BJ (cell line): ENCODE measurements at regions of chr12 and their contacts with region 1.

Region 1: DNA sequence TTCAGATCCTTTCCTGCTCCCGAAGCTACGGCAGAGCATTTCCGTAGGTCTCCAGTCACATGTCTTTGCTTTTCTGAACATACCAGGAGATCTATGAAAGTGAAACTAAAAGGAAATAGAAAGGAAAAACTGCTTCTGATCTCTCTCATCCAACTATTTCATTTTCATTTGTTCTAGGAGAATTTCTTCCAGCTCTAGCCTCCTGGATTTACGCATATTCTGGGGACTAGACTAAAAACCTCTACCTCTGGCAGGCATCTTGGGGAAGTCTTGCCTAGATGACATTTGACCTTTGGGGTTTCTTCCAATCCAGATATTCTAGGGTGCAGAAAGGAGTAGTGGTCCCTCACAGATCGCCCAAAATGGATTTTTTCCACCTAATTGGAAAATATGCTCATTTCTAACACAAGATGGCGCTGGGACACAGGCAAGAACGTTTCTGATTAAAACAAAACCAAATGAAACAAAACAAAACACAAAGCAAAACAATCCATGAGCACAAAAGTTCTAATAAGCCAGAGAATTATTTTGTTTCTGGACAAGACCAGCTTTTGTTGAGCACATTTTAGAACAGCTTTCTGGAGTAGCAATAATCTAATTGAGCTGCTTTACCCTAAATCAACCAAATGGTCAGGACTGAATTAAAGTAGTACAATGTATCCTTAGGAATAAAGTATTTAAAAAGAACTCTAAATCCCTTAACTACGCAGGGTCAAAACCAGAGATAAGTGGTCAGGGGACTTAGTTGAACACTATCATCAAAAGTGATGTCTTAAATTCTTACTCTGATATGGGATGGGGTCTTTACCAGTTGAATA is 12.3 kb upstream of the PARP11 start:
- DNase-seq: no peak
- H3K4me3 ChIP-seq: peak overlapping the region; percentile 34
- H3K27me3 ChIP-seq: peaks cover 2% of the 10 kb centered on the region
- CTCF ChIP-seq: peak; percentile 77

Region 2: GRCh38 chr12:3752741-3753486 is 132.6 kb before region 1 on chr12 and contains the start of gene CRACR2A:
- CTCF ChIA-PET with region 1: no interaction called
- POLR2A ChIA-PET with region 1: no interaction called
- DNase-seq: no peak
- H3K4me3 ChIP-seq: peak within 1 kb of the TSS; percentile 42
- H3K27me3 ChIP-seq: peaks cover 2% of the 10 kb centered on the region
- CTCF ChIP-seq: peak; percentile 44
- polyA plus RNA-seq, gene CRACR2A: 1.4 TPM in 2 replicates

Region 3: GRCh38 chr12:3872800-3873636 is 12.5 kb before region 1 on chr12 and contains the start of gene PARP11:
- CTCF ChIA-PET with region 1: interaction called, 16 read pairs
- POLR2A ChIA-PET with region 1: no interaction called
- DNase-seq: peak; percentile 79
- H3K4me3 ChIP-seq: peak within 1 kb of the TSS; percentile 65
- H3K27me3 ChIP-seq: no peaks in the 10 kb centered on the region
- CTCF ChIP-seq: no peak
- polyA plus RNA-seq, gene PARP11: 3.4 and 7.0 TPM in 2 replicates

Region 4: GRCh38 chr12:3896801-3897331 is 11.4 kb after region 1 on chr12:
- CTCF ChIA-PET with region 1: interaction called, 25 read pairs
- POLR2A ChIA-PET with region 1: no interaction called
- DNase-seq: no peak
- H3K4me3 ChIP-seq: no peak overlapping the region
- H3K27me3 ChIP-seq: peaks cover 4% of the 10 kb centered on the region; the same call in 1 of the 2 replicates
- CTCF ChIP-seq: no peak

Region 5: DNA sequence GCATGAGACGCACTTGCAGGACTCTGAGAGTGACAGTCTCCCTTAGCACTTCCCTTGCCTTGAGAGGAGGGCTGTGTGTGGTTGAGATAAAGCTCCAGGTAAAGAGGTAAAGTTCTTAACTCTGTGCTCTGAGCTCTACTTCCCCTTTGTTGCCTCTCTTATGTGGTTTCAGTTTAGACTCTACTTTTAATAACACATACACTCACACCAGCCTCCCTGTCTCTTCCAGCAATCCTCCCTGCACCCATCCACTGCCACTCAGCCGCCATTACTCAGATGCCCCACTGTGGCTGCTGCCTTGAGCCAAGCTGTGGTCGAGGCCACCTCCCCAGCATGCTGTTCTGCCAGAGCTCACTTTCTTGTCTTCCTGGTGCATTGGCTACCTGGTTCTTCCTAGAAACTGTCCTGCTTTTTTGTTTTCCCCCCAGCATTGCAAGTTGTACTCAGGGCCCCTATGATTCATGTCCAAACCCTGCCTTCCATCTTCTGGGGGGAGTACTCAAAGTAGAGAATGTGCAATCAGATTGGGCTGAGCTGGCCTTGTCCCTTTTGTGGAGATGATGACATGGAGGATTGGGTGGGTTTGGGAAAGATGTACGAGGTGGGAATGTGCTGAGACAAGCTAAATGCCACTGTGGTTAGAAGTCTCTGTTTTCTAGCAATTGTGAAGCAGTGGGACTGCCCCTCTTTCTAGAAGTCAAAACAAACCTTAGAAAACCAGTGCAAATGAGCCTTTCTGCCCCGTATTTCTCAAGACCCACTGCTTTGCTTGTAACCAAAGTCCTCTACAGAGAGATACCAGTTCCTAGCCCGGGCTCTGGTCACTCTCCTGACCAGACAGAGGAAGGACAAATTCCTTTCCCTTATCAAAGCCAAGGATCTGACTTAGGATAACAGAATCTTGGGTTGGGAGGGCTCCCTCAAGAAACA is 103.3 kb after region 1 on chr12:
- CTCF ChIA-PET with region 1: interaction called, 21 read pairs
- POLR2A ChIA-PET with region 1: no interaction called
- DNase-seq: no peak
- H3K4me3 ChIP-seq: no peak overlapping the region
- H3K27me3 ChIP-seq: peaks cover 1% of the 10 kb centered on the region
- CTCF ChIP-seq: no peak

Region 6: GRCh38 chr12:4015232-4016091 is 130.0 kb after region 1 on chr12:
- CTCF ChIA-PET with region 1: no interaction called
- POLR2A ChIA-PET with region 1: no interaction called
- DNase-seq: no peak
- H3K4me3 ChIP-seq: no peak overlapping the region
- H3K27me3 ChIP-seq: no peaks in the 10 kb centered on the region
- CTCF ChIP-seq: no peak

Region 7: GRCh38 chr12:4037747-4038312 is 152.3 kb after region 1 on chr12:
- CTCF ChIA-PET with region 1: interaction called, 100 read pairs
- POLR2A ChIA-PET with region 1: no interaction called
- DNase-seq: no peak
- H3K4me3 ChIP-seq: no peak overlapping the region
- H3K27me3 ChIP-seq: peaks cover 11% of the 10 kb centered on the region
- CTCF ChIP-seq: peak; percentile 72